ENCODE measurements at regions of chr7 and their contacts with region 1.

Region 1: DNA sequence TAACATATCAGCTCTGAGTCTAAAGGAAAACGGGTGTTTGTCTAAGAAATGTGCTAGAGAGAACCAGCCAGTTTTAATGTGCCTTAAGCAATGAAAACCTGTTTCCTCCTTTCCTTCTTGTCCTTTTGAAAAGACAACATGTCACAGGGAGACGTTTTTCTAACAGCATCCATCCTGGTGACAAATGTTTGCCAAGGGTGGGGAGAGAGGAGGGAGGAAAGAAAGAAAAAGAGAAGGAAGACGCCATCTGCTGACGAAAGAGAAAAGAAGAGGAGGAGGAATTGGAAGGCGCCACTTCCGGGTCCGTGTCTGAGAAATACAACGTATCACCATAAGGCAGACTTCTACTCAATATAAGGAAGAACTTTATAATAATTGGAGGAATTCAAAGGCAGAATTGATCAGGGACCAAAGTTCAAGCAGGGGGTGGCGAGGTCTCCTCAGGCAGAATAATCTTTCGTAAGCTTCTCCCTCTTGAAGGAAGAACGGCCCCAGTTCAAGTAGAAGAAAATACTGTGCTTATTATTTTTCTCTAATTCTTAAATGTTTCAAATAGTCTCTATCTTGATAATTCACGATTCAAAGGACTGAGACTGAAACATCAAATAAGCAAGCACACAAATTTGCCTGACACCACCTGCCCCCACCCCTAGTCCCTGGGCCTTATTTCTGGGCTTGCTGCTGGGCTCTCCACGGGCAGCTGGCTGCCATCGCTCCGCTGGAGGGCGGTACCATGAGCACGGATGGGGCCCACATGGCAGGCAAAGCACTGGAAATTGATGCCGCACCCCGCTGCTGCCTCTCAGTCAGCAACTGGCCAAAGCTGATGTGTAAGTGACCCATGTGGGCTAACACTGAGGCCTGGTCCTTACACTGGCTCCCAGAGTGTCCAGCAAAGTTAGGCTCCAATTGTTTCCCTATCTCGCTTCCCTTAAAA is 273.7 kb upstream of the KLF14 start:
- DNase-seq: peak; percentile 76 to 90 (median 80)
- ATAC-seq: peak; percentile 96
- H3K4me3 ChIP-seq: no peak overlapping the region
- H3K27ac ChIP-seq: peak overlapping the region; percentile 50
- H3K4me1 ChIP-seq: peaks cover 12 to 13% of the 10 kb centered on the region in 2 experiments
- H3K27me3 ChIP-seq: no peaks in the 10 kb centered on the region
- CTCF ChIP-seq: peak; percentile 79 to 91 (median 79)
- EP300 ChIP-seq: no peak
- POLR2A ChIP-seq: no peak
- RAD21 ChIP-seq: peak; percentile 87 to 89

Region 2: DNA sequence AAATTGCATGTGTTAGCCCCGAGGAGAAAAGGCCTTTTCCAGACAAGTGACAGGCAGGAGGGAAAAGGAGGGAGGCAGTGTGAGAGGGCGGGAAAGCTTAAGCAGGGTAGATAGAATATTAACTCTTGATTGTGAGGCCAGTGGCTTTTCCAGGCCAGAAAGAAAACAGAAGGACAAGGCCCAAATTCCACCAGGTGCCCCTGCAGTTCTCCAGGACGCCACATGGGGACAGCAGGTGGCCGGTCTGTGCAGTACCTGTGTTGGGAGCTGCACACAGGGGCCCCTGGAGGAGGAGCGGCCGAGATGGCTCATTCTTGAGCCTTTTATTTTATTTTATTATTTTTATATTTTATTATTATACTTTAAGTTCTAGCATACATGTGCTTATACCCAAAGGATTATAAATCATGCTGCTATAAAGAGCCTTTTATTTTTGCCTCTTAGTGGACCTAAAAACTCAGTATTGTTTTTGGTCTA is 132.4 kb before region 1 on chr7:
- CTCF ChIA-PET with region 1: interaction called, 4 read pairs
- POLR2A ChIA-PET with region 1: no interaction called
- in situ Hi-C with region 1: no loop called
- intact Hi-C with region 1: loop called (anchors 1 kb)
- DNase-seq: peak; percentile 79 to 93 (median 90)
- ATAC-seq: peak; percentile 100
- H3K4me3 ChIP-seq: no peak overlapping the region
- H3K27ac ChIP-seq: no peak overlapping the region
- H3K4me1 ChIP-seq: no peaks in the 10 kb centered on the region
- H3K27me3 ChIP-seq: no peaks in the 10 kb centered on the region
- CTCF ChIP-seq: peak; percentile 97 to 99 (median 99)
- EP300 ChIP-seq: no peak
- POLR2A ChIP-seq: no peak
- RAD21 ChIP-seq: peak; percentile 72 to 93

Region 3: GRCh38 chr7:130961128-130961601 is 46.5 kb before region 1 on chr7:
- CTCF ChIA-PET with region 1: no interaction called
- POLR2A ChIA-PET with region 1: no interaction called
- in situ Hi-C with region 1: no loop called
- intact Hi-C with region 1: loop called (anchors 2 kb)
- DNase-seq: peak in 1 of 4 experiments; percentile 35
- ATAC-seq: peak; percentile 57
- H3K4me3 ChIP-seq: no peak overlapping the region
- H3K27ac ChIP-seq: peak overlapping the region; percentile 3; the same call in 2 of the 3 replicates
- H3K4me1 ChIP-seq: peaks cover 0 to 22% of the 10 kb centered on the region in 2 experiments; a peak in 4 of 5 replicates
- H3K27me3 ChIP-seq: no peaks in the 10 kb centered on the region
- CTCF ChIP-seq: no peak
- EP300 ChIP-seq: no peak
- POLR2A ChIP-seq: no peak
- RAD21 ChIP-seq: no peak

Region 4: DNA sequence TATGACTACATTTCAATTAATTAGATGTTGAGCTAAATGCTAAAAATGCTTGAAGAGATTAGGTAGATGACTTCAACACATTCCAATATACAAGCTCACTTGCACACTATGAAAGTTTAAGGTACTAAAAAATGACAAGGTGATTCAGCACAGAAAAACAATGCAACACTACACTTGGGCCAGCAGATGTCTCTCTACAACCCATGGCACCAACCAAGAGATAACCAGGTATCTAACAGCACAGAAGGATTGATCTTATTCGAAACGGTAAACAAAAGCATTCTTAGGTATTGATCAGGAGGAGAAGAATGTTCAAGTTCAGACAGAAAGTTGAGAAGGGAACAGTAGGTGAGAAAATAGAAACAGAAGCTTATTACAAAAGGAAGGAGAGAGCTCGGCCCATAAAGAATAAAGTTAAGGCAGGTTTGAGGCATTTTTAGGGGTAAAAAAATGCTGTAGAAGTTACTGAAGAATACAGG is 25.5 kb before region 1 on chr7:
- CTCF ChIA-PET with region 1: interaction called, 5 read pairs
- POLR2A ChIA-PET with region 1: no interaction called
- in situ Hi-C with region 1: no loop called
- intact Hi-C with region 1: loop called (anchors 1 kb)
- DNase-seq: peak; percentile 46 to 68 (median 58)
- ATAC-seq: peak; percentile 96
- H3K4me3 ChIP-seq: no peak overlapping the region
- H3K27ac ChIP-seq: no peak overlapping the region
- H3K4me1 ChIP-seq: no peaks in the 10 kb centered on the region; a peak in 1 of 5 replicates
- H3K27me3 ChIP-seq: no peaks in the 10 kb centered on the region
- CTCF ChIP-seq: peak; percentile 74 to 92 (median 84)
- EP300 ChIP-seq: peak; percentile 8; the same call in 1 of the 2 replicates
- POLR2A ChIP-seq: no peak
- RAD21 ChIP-seq: peak; percentile 79 to 89

Measured in K562 (cell line).